HEK293 (cell line): ENCODE measurements at regions of chr13 and their contacts with region 1.

Region 1: GRCh38 chr13:27620377-27621115 is at the start of gene LNX2:
- H3K4me3 ChIP-seq: peak within 1 kb of the TSS; percentile 70
- H3K27ac ChIP-seq: peak within 1 kb of the TSS; percentile 98
- H3K4me1 ChIP-seq: 0 out of 2 replicates have a peak, but pooled peaks cover 4% of the 10 kb centered on the region
- CTCF ChIP-seq: no peak

Region 2: DNA sequence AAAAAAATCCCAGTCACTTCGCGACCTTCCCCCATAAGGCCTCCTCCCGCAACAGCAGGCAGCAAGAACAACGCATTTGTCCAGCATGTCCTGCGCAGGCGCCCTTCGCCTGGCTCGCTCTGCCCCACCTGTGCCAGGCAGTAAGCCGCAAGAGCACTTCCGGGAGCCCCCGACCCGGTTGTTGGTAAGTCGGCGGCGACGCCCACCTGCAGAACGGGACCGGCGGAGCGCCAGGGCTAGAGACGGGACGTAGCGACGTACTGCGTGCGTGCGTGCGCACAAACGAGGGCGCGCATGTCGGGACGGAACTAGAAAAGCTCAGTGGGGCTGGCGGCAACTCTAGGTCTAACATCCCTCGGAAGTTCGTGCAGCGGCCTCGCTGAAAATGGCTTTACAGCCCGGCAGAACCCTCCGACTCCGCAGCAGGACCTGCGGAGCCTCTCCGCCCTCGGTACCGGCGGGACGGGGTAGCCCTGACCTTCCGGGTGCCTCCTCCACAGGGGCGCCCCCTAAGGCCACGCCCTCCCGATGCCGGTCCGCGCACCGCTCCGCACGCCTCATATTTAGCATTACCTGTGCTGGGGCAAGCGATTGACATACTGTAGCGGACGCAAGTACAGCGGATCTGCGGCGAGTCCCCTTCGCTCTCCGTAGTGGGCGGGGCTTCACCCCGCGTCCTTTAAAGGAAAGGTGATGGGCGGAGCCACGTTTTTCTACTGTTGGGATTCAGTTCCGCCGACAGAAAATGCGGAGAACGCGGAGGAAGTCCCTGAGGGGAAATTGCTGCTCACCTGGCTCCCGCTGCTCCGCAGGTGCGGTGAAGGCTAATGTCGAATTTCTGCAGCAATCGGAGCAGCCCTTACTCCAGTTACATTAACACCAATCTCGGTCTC is 170.4 kb before region 1 on chr13 and contains the start of gene MTIF3:
- CTCF ChIA-PET with region 1: interaction called, 3 read pairs
- POLR2A ChIA-PET with region 1: interaction called, 16 read pairs
- H3K4me3 ChIP-seq: peak within 1 kb of the TSS; percentile 79
- H3K27ac ChIP-seq: peak within 1 kb of the TSS; percentile 95
- H3K4me1 ChIP-seq: peaks cover 3% of the 10 kb centered on the region; the same call in 1 of the 2 replicates
- CTCF ChIP-seq: no peak; the same call in 1 of the 2 replicates

Region 3: DNA sequence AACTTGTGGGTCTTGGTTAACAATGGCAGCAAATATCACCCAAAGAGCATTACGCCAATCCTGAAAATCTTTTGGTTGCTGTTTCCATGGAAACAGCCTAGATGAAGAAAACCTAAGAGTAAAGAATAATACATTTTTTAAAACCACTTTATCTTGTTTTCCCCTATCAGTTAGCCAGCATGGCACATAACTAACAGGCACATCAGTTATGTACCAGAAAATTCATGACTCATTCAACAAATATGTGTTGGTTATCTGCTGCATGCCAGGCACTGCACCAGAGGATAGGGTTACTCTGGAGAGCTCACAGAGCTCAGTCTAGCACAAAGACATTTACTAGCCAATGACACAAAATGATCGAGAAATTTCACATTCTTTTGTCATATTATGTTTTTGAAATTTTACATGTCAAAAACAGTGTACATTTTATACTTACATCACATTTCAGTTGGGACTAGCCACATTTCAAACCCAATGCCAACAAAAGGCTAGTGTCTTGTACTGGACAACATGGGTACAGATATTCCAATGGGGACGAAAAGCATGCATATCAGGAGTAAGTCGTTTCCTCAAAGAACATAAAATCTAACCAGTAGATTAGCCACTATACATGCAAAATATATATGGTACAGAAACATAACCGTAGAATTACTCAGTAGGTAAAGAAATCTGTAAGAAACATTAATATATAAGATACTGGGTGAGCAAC is 20.5 kb before region 1 on chr13:
- CTCF ChIA-PET with region 1: no interaction called
- POLR2A ChIA-PET with region 1: interaction called, 12 read pairs
- H3K4me3 ChIP-seq: no peak overlapping the region
- H3K27ac ChIP-seq: no peak overlapping the region
- H3K4me1 ChIP-seq: no peaks in the 10 kb centered on the region
- CTCF ChIP-seq: no peak